Dendritic cell treated with granulocyte-macrophage colony-stimulating factor and Interleukin-4, amounts not matched to agents 40 ng/mL and 50 ng/mL, for 4 days (primary cell): ENCODE measurements at regions of chr4 and their contacts with region 1.

Region 1: DNA sequence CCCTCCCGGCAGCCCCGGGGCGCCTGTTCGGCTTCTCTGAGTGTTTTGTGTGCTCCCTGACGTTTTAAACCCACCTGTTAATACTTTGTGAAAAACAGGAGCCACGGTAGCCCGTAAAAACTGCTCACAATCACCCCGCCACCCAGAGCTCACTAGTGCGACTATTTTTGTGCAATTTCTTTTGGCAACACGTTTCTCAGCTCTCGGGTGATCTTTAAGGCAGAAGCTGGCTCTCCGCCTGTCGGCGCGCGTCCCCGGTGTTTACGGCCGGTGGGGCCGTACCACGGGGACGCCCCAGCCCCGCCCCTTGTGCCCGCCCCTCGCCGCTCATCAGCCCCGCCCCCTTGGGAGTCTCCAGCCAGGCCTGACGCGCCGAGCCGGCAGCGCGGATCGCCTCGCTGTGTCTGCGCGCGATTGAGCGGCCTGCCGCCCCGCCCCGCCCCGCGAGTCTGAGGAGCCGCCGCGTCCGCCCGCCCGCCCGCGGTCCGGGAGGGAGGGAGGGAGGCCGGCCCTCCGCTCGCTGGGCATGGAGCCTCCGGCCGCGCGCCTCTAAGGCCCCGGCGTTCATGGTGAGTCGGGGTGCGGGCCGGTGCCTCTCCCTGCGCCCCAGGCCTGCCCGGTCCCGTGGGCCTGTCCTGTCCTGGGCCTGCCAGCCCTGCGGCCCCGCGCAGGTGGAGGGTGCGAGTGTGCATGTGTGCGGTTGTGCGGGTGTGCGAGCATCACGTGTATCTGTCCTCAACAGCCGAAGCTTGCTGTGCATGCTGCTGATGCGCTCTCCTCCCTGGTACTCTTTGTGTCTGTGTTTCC is 56.2 kb upstream of the TADA2B start:
- H3K4me3 Mint-ChIP-seq: peak overlapping the region; percentile 81
- H3K27ac Mint-ChIP-seq: peak overlapping the region; percentile 92
- H3K4me1 Mint-ChIP-seq: peaks cover 89% of the 10 kb centered on the region
- H3K27me3 Mint-ChIP-seq: no peaks in the 10 kb centered on the region

Region 2: GRCh38 chr4:6716018-6716911 is 270.7 kb before region 1 on chr4 and contains the start of gene BLOC1S4:
- intact Hi-C with region 1: loop called (anchors 5 kb)
- H3K4me3 Mint-ChIP-seq: peak within 1 kb of the TSS; percentile 98
- H3K27ac Mint-ChIP-seq: peak within 1 kb of the TSS; percentile 97
- H3K4me1 Mint-ChIP-seq: peaks cover 34% of the 10 kb centered on the region
- H3K27me3 Mint-ChIP-seq: peaks cover 3% of the 10 kb centered on the region

Region 3: GRCh38 chr4:6909073-6909965 is 77.7 kb before region 1 on chr4 and contains the start of gene TBC1D14:
- intact Hi-C with region 1: loop called (anchors 1 kb)
- H3K4me3 Mint-ChIP-seq: peak within 1 kb of the TSS; percentile 96
- H3K27ac Mint-ChIP-seq: peak within 1 kb of the TSS; percentile 98
- H3K4me1 Mint-ChIP-seq: peaks cover 76% of the 10 kb centered on the region
- H3K27me3 Mint-ChIP-seq: peaks cover 13% of the 10 kb centered on the region

Region 4: DNA sequence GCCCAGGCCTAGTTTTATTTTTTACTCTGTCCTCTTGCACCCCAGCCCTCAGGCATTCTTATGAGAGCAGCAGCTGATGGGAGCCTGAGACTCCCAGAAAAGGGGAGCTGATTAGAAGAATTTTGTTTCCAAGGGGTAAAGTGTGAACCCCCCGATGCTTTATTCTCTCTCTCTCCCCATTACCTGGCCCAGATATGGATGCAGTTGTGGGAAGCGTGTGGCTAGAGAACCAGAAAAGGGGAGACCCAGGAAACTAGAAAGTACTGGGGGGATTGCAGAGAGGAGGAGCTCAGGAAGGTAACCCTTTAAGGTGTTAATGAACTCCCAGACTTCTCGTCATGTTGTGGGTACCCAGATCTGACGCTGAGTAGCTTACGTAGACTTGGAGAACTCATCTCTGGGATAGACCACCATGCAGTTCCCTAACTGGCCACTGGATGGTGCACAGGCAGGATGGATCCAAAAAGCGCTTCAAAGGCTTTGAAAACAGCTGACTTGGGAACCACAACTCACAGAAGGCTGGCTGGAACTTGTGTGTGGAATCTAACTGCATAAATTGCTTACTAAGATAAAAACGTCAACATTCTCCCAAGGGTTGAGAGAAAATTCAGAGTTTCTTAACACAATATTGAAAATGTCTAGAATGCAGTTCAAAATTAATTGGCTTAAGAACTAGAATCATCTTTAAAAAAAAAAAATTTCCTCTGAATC is 12.7 kb before region 1 on chr4:
- intact Hi-C with region 1: loop called (anchors 2 kb)
- H3K4me3 Mint-ChIP-seq: no peak overlapping the region
- H3K27ac Mint-ChIP-seq: peak overlapping the region; percentile 34
- H3K4me1 Mint-ChIP-seq: peaks cover 31% of the 10 kb centered on the region
- H3K27me3 Mint-ChIP-seq: no peaks in the 10 kb centered on the region

Region 5: DNA sequence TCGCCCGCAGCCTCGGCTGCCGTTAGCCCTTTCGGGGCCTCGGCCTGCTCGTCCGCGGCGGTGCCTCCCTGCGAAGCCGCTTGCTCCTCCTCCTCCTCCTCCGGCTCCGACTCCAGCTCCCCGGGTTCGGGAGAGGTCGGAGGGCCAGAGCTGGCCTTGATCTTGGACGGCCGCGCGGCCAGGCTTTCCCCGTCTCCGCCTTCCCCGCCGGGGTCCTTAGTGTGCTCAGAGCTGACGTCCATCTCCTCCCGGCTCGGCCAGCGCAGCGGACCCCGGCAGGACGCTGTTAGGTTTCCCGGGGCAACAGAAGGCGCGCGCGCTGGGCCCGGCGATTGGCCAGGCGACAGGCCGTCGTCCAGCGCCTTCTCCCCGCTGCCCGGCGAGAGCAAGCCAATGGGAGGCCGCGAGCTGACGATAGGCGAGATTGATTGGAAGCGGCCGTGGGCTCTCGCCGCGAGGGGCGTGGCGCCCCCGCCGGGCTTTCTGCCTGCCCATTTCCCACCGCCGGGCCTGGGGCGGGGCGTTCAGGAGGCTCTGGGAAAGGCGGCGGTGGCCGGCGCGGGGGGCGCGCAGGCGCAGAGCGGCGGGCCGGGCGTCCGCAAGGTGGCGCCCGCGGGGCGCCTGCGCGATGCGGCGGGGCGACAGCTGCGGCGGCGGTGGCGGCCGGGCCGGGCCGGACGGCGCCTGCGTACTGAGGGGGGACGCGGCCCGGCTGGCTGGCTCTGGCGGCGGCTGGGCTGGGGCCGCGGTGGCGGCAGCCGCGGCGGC is 55.9 kb after region 1 on chr4 and contains the start of gene TADA2B:
- intact Hi-C with region 1: loop called (anchors 2 kb)
- H3K4me3 Mint-ChIP-seq: peak within 1 kb of the TSS; percentile 82
- H3K27ac Mint-ChIP-seq: peak within 1 kb of the TSS; percentile 82
- H3K4me1 Mint-ChIP-seq: peaks cover 57% of the 10 kb centered on the region
- H3K27me3 Mint-ChIP-seq: no peaks in the 10 kb centered on the region